Left colon (tissue), 2 donors: ENCODE measurements at regions of chr7 and their contacts with region 1.

Region 1: GRCh38 chr7:117458977-117459583 is 20.7 kb upstream of the CFTR start:
- DNase-seq: no peak
- ATAC-seq: peak; percentile 60

Region 2: DNA sequence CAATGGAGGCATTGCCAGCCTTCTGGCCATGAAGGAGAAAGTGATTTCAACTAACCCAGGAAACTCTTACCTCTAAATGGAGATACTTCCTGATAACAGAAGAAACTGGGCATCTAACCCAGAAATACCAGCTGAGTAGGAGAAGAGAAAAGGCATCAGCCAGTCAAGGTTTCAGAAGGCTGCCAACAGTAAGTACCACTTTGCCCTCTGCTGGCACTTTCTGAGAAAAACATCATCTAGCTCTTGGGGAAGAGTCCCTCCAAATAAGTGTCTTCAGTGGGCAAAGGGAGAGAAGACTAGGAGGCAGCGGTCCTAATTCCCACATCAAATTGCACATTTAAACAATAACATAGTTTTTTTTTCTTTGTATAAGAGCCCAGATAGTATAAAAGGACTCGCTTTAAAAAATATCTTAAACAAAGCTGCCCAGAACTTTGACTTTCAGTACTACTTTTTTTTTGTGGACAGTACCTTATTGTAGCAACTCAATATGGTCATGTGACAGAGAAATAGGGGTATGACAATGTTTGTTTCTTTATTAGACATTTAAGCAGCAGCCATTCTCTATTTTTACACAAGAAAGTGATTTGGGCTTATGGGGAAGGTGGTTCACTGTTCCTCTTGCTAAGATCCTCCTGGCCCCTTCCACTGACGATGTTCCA is 256.8 kb after region 1 on chr7:
- intact Hi-C with region 1: loop called in 1 of 2 experiments (anchors 10 kb)
- DNase-seq: peak; percentile 29 to 37
- ATAC-seq: peak; percentile 94